Esophagus squamous epithelium (tissue), 5 donors: ENCODE measurements at regions of chr9 and their contacts with region 1.

Region 1: DNA sequence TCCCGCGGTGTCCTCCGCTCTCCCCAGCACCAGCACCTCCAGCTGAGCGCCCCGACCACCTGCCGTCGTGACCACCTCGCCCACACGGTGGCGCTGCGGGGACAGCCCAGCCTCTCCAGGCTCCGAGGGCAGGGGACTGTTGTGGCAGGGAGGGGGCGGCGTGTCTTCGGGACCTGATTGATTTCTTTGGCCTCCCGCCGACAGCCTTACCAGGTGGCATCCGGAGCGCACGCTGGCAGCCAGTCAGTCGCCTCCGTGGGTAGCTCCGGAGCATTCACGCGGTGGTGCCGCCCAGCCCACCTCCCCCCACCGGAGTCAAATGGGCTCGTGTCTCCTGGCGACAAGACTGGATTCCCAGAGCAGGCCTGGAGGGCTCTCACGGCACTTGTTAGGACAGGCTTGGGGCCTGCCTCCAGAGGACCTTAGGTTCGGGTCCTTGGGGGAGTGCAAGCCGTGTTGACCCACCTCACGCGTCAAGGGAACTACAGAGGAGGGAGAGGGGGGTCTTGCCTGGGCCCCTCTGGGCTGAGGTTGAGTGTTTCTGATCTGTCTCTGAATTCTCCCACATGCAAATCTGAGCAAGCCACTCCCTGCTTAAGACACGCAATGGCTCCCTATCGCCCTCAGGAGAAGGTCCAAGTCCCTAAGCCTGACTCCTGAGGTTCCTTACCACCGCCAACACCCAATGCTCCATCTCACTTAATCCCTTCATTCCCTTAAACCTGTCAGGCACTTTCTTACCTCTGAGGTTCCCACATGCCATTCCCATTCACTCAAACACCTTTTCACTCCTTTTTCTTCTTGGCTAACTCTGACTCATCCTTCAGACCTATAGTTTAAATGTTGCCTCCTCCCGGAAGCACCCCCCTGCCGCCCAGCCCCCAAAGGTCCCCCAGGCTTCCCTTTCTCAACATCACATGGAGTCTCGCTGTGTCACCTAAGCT is 51.2 kb upstream of the GGTA1 start:
- DNase-seq: no peak
- H3K4me3 ChIP-seq: peak overlapping the region; percentile 3 to 57 (median 34)
- H3K27ac ChIP-seq: peak overlapping the region in 3 of 4 donors; percentile 6 to 37 (median 7)
- H3K4me1 ChIP-seq: peaks cover 7 to 37% (median 15%) of the 10 kb centered on the region in 3 donors
- H3K27me3 ChIP-seq: no peaks in the 10 kb centered on the region
- CTCF ChIP-seq: peak; percentile 89 to 98 (median 96)
- POLR2A ChIP-seq: no peak

Region 2: DNA sequence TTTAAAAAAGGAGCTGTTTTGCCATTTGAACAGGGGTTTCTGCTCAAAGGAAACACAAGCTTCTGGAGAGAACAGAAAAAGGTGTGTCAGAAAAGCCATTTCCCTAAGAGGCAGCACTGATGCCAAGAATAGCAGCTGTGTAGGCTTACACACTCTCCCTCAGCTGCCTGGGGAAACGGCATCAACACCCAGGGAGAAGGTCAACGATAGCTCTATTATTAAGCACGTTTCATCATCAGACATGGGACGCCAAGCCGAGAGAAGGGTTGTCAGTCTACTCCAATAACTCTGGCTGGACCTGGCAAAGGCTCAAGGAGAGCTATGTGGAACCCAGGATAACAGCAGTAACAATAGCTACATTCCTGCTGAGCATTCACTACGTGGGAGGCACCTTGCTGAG is 1285.0 kb before region 1 on chr9:
- intact Hi-C with region 1: no loop called
- DNase-seq: no peak
- H3K4me3 ChIP-seq: no peak overlapping the region
- H3K27ac ChIP-seq: no peak overlapping the region
- H3K4me1 ChIP-seq: no peaks in the 10 kb centered on the region
- H3K27me3 ChIP-seq: no peaks in the 10 kb centered on the region
- CTCF ChIP-seq: no peak
- POLR2A ChIP-seq: no peak

Region 3: GRCh38 chr9:121598965-121599871 is 48.4 kb after region 1 on chr9:
- intact Hi-C with region 1: loop called (anchors 5 kb)
- DNase-seq: no peak
- H3K4me3 ChIP-seq: peak overlapping the region; percentile 51 to 67 (median 62)
- H3K27ac ChIP-seq: peak overlapping the region; percentile 81 to 96 (median 84)
- H3K4me1 ChIP-seq: peaks cover 25 to 49% (median 30%) of the 10 kb centered on the region in 3 donors
- H3K27me3 ChIP-seq: peaks cover 0 to 26% (median 0%) of the 10 kb centered on the region in 4 donors
- CTCF ChIP-seq: no peak
- POLR2A ChIP-seq: peak in 2 of 4 donors; percentile 37 to 52

Region 4: DNA sequence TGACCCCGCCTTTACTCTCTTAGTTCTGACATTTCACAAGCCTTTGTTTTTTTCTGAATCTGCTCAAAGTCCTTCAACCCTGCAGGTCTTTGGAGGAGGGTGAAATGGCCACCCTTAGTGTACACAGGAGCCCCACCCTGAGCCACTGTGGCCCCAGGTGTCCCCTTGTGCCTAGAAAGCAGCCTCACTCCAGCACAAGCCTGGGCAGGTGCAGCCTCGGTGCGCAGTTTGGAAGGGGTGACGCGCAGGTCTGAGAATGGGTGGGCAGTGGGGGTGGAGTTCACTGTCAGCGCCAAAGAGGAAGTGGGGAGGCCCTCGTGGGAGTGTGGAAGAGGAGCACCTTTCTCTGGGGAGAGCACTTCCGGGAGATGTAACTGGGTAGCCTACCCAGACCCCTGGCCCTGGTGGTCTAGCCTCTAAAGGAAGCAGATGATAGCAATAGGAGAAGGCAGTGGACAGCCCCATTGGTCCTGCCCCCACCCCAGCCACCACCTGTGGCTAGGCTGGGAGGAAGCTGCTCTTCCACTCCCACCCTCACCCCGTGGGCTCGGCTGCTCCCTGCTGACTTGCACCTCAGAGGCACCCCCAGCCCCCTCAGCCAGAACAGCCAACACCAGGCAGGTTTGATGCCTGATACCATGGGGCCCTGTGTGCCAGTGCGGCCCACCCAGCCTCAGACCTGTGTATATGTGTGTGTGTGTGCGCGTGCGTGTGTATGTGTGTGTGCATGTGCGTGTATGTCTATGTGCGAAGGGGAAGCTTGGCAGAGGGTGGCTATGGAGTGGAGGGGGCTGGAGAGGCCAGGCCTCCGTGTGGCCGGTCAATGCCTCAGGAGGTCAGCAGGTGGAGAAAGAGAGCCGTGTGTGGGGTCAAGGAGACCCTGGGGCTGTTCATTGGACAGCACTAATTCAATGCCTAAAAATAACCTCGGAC is 83.8 kb after region 1 on chr9:
- intact Hi-C with region 1: no loop called
- DNase-seq: no peak
- H3K4me3 ChIP-seq: no peak overlapping the region
- H3K27ac ChIP-seq: no peak overlapping the region
- H3K4me1 ChIP-seq: peaks cover 17 to 49% (median 41%) of the 10 kb centered on the region in 3 donors
- H3K27me3 ChIP-seq: no peaks in the 10 kb centered on the region
- CTCF ChIP-seq: peak in 1 of 6 experiments; percentile 22
- POLR2A ChIP-seq: no peak

Region 5: DNA sequence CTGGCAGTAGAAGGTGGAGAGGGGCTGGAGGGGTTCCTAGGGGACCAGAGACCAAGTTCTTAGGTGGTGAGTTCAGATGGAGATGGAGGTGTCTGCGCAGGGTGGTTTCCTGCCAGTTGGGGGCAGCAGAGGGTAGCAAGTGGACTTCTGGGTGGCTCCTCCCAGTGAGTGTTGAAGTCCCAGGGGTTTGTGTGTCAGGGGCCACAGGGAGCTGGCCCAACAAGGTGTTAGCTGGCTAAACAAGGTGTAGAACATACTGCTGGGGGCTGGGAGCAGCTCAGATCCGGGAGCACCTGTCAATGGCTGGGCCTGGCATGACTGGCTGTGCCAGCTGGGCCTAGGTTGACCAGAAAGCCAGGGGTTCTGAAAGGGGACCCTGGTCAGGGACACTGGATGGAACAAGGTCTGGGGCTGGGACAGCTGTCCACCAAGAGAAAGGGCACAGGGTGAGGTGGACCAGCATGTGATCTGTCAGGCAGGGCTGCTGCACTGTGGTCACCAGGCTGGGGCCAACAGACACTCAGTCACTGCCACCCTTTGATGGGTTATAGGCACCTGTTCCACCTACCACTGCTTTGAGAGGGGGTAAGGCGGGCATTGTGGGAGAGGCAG is 136.2 kb after region 1 on chr9:
- intact Hi-C with region 1: loop called (anchors 5 kb)
- DNase-seq: no peak
- H3K4me3 ChIP-seq: no peak overlapping the region
- H3K27ac ChIP-seq: peak overlapping the region in 1 of 4 donors; percentile 34
- H3K4me1 ChIP-seq: peaks cover 0 to 33% (median 3%) of the 10 kb centered on the region in 3 donors
- H3K27me3 ChIP-seq: no peaks in the 10 kb centered on the region
- CTCF ChIP-seq: peak in 5 of 6 experiments; percentile 76 to 87 (median 81)
- POLR2A ChIP-seq: no peak

Region 6: GRCh38 chr9:121992571-121993212 is 441.9 kb after region 1 on chr9:
- intact Hi-C with region 1: loop called (anchors 5 kb)
- DNase-seq: no peak
- H3K4me3 ChIP-seq: no peak overlapping the region
- H3K27ac ChIP-seq: no peak overlapping the region
- H3K4me1 ChIP-seq: peaks cover 0 to 9% (median 0%) of the 10 kb centered on the region in 3 donors
- H3K27me3 ChIP-seq: no peaks in the 10 kb centered on the region
- CTCF ChIP-seq: peak; percentile 80 to 90 (median 86)
- POLR2A ChIP-seq: no peak

Region 7: DNA sequence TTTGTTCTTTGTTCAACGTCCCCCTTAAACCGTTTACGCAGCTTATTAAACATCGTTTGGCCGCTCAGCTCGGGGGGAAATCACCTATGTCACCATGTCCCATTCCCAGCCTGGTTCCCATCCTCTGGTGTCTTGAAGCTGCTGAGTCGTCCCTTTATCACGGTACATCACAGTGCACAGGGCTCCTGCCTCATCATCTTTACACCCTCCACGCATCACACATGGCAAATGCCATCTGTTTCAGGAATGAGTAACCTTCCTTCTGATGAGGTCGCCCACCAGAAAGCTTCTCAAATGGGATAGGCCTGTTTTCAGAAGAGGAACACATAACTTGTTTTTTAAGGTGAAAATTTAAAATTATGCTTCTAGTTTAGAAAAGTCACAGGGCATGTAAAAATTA is 685.8 kb after region 1 on chr9:
- intact Hi-C with region 1: no loop called
- DNase-seq: no peak
- H3K4me3 ChIP-seq: no peak overlapping the region
- H3K27ac ChIP-seq: no peak overlapping the region
- H3K4me1 ChIP-seq: no peaks in the 10 kb centered on the region
- H3K27me3 ChIP-seq: peaks cover 0 to 15% (median under 1%) of the 10 kb centered on the region in 4 donors
- CTCF ChIP-seq: no peak
- POLR2A ChIP-seq: no peak